HAP-1 (cell line): ENCODE measurements at regions of chr17 and their contacts with region 1.

Region 1: GRCh38 chr17:58447039-58447975 is 30.0 kb upstream of the RNF43 start:
- DNase-seq: peak; percentile 67 to 86
- H3K4me3 ChIP-seq: no peak overlapping the region
- H3K4me1 ChIP-seq: no peaks in the 10 kb centered on the region
- H3K27me3 ChIP-seq: 0 out of 2 replicates have a peak, but pooled peaks cover 3% of the 10 kb centered on the region

Region 2: GRCh38 chr17:58317421-58318064 is 129.8 kb before region 1 on chr17:
- in situ Hi-C with region 1: loop called (anchors 5 kb)
- DNase-seq: peak; percentile 10 to 60
- H3K4me3 ChIP-seq: no peak overlapping the region
- H3K4me1 ChIP-seq: no peaks in the 10 kb centered on the region
- H3K27me3 ChIP-seq: no peaks in the 10 kb centered on the region

Region 3: DNA sequence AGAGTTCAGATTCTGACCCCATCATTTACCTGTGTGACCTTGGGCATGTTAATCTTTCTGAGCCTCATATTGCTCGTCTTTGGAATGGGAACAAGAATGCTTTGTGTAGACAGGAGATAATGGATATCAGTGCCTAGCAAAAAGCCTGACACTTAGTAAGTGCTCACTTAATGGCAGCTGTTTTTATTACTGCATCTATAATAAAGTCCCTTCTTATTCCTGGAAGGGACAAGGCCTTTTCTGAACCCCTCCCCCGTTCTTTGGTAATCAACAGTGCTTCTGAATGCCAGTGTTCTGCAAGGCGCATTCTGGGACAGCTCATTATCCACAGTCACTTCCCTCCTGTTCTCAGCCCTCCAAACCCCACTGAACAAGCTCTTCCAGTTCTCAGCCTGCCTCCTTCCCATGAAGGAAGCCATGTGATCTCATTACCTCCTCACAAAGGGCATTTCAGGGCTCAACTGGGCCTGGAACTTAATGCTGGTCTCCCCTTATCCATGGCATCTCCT is 70.2 kb before region 1 on chr17:
- in situ Hi-C with region 1: no loop called
- DNase-seq: no peak
- H3K4me3 ChIP-seq: no peak overlapping the region
- H3K4me1 ChIP-seq: no peaks in the 10 kb centered on the region
- H3K27me3 ChIP-seq: no peaks in the 10 kb centered on the region; the same call in 1 of the 2 replicates

Region 4: DNA sequence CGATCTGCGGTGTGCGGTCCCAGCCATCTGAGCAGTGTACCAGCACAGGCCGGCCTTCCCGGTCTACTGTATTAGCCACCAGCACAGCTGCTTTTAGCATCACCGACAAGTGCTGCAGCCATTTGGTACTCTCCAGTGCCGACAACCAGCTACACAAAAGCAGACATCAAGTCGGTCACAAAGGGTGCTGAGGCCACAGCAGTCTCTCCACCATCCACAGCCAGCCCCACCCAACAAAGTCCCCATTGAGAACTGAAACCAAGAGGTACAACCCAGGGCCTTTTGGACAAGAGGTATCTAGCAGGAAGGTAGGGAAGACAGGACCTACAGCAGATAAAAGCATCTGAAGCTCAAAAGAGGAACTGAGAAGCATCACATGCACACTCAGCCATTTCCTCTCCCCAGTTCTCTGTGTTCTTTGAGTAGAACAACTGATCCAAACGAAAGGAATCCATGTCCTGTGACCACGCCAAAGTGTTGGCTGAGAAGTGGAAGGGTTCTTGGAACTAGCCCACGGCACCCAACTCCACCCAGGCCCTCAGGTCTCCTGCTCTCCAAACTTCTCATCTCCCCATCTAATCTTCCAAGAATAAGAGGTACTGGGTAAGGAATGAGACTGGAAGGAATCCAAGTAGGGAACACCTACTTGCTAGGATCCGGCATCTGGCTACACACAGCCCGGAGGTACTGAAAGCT is 57.7 kb after region 1 on chr17:
- in situ Hi-C with region 1: no loop called
- DNase-seq: no peak
- H3K4me3 ChIP-seq: no peak overlapping the region
- H3K4me1 ChIP-seq: no peaks in the 10 kb centered on the region
- H3K27me3 ChIP-seq: no peaks in the 10 kb centered on the region

Region 5: GRCh38 chr17:58679263-58680037 is 232.1 kb after region 1 on chr17:
- in situ Hi-C with region 1: no loop called
- DNase-seq: peak; percentile 38 to 41
- H3K4me3 ChIP-seq: no peak overlapping the region
- H3K4me1 ChIP-seq: peaks cover 6% of the 10 kb centered on the region
- H3K27me3 ChIP-seq: no peaks in the 10 kb centered on the region